ENCODE measurements at regions of chr2 and their contacts with region 1.

Region 1: GRCh38 chr2:65357095-65357958 is 75.1 kb downstream of the SPRED2 start:
- DNase-seq: no peak
- H3K4me3 Mint-ChIP-seq: peak overlapping the region; percentile 35
- H3K27ac Mint-ChIP-seq: peak overlapping the region; percentile 65
- H3K4me1 Mint-ChIP-seq: peaks cover 57% of the 10 kb centered on the region
- H3K27me3 Mint-ChIP-seq: peaks cover 8% of the 10 kb centered on the region

Region 2: GRCh38 chr2:65320042-65320725 is 37.1 kb before region 1 on chr2:
- intact Hi-C with region 1: loop called (anchors 5 kb)
- DNase-seq: no peak
- H3K4me3 Mint-ChIP-seq: no peak overlapping the region
- H3K27ac Mint-ChIP-seq: peak overlapping the region; percentile 42
- H3K4me1 Mint-ChIP-seq: peaks cover 16% of the 10 kb centered on the region
- H3K27me3 Mint-ChIP-seq: no peaks in the 10 kb centered on the region